SK-N-SH (cell line): ENCODE measurements at regions of chr5 and their contacts with region 1.

Region 1: GRCh38 chr5:73985145-73985544 is 359.1 kb downstream of the ARHGEF28 start:
- DNase-seq: peak; percentile 22
- H3K4me3 ChIP-seq: no peak overlapping the region
- H3K27ac ChIP-seq: no peak overlapping the region
- H3K4me1 ChIP-seq: no peaks in the 10 kb centered on the region
- H3K27me3 ChIP-seq: no peaks in the 10 kb centered on the region
- CTCF ChIP-seq: peak; percentile 55
- EP300 ChIP-seq: no peak
- RAD21 ChIP-seq: peak; percentile 66

Region 2: DNA sequence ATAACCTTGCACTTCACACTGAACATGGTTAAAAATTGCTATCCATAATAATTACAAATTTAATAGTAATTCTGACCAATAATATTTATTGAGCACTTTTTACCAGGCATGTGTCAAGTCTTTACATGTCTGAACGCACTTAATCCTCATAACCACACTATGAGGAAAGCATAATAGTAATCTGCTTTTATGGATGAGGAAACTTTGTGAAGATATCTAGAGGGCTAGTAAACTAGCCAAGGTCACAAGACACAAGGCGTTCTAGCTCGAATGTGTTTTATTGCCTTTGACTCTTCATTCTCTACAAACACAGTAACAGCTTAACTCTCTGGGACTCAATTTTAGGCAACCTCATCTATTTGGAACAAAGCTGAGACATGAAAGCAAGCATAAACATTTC is 154.1 kb before region 1 on chr5:
- CTCF ChIA-PET with region 1: no interaction called
- POLR2A ChIA-PET with region 1: no interaction called
- DNase-seq: no peak
- H3K4me3 ChIP-seq: no peak overlapping the region
- H3K27ac ChIP-seq: no peak overlapping the region
- H3K4me1 ChIP-seq: no peaks in the 10 kb centered on the region
- H3K27me3 ChIP-seq: no peaks in the 10 kb centered on the region
- CTCF ChIP-seq: no peak
- EP300 ChIP-seq: no peak
- RAD21 ChIP-seq: no peak

Region 3: GRCh38 chr5:73974871-73975360 is 10.2 kb before region 1 on chr5:
- CTCF ChIA-PET with region 1: interaction called, 11 read pairs
- POLR2A ChIA-PET with region 1: no interaction called
- DNase-seq: no peak
- H3K4me3 ChIP-seq: no peak overlapping the region
- H3K27ac ChIP-seq: no peak overlapping the region
- H3K4me1 ChIP-seq: peaks cover 0 to 3% of the 10 kb centered on the region in 2 experiments; a peak in 1 of 4 replicates
- H3K27me3 ChIP-seq: no peaks in the 10 kb centered on the region
- CTCF ChIP-seq: no peak
- EP300 ChIP-seq: no peak
- RAD21 ChIP-seq: no peak

Region 4: GRCh38 chr5:74007193-74007592 is 22.0 kb after region 1 on chr5:
- CTCF ChIA-PET with region 1: no interaction called
- POLR2A ChIA-PET with region 1: no interaction called
- DNase-seq: no peak
- H3K4me3 ChIP-seq: no peak overlapping the region
- H3K27ac ChIP-seq: peak overlapping the region in 1 of 2 experiments; percentile 4; a peak in 1 of 4 replicates
- H3K4me1 ChIP-seq: peaks cover 0 to 8% of the 10 kb centered on the region in 2 experiments; a peak in 2 of 4 replicates
- H3K27me3 ChIP-seq: no peaks in the 10 kb centered on the region
- CTCF ChIP-seq: no peak
- EP300 ChIP-seq: peak in 1 of 2 experiments; percentile 52; a peak in 2 of 4 replicates
- RAD21 ChIP-seq: no peak